Endothelial cell of umbilical vein (primary cell): ENCODE measurements at regions of chr3 and their contacts with region 1.

Region 1: DNA sequence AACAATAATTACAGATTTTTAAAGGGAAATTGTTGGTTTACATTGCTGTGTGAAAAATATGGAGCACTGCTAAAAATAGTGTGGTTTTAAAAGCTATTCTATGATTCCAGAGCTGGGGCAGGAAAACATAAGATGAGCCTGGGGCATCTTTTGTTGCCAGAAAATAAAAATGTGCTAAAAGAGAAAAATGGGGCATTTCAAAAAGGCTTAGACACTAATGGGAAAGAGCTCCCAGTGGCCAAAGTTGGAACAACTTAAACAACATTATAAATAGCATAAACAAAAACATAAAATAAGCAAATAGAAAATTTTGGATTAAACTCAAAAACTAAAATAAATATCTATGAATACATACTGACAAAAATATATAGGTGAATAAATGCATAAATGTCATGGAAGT is 478.9 kb downstream of the NLGN1 start:
- DNase-seq: no peak
- H3K4me3 ChIP-seq: no peak overlapping the region
- H3K27ac ChIP-seq: no peak overlapping the region
- H3K4me1 ChIP-seq: no peaks in the 10 kb centered on the region
- H3K27me3 ChIP-seq: no peaks in the 10 kb centered on the region
- CTCF ChIP-seq: peak; percentile 13 to 23
- POLR2A ChIP-seq: no peak

Region 2: DNA sequence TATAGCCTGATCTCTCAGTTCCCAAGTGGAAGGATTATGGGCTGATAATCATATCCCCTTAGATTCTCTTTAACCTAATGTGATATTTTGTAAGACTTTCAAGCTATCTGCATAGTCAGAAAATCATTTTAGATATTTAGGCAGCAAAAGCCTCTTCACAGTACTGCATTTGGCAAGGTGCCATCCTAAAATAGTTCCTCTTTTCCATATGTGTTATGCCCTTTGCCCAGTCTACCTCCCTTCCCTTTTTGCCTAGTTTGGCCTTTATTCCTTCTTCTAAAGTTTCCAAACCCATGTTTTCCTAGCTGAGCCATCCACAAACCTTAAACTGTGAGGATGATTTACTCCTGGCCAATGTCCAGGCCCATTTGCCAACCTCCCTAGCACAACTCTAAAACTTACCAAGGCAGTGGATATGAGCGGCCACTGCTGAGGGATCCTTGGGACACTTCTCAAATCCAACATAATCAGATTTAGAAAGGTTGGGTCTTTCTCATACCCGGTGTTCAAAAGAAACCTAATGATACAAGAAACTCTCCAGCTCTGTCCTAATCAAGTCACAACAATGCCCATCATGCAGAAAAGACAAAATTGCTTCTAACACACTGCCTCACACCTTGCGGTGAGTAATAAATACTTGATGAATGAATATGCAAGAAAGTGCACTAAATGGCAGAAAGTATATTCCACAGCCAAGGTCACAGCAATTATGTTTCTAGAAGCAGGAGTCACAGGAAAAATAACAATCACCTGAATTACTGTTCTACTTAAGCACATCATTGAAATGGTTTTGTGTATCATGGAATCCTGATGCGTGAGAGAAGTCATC is 15.0 kb after region 1 on chr3:
- CTCF ChIA-PET with region 1: interaction called, 20 read pairs
- POLR2A ChIA-PET with region 1: no interaction called
- dilution Hi-C with region 1: no loop called
- intact Hi-C with region 1: no loop called
- DNase-seq: peak; percentile 17
- H3K4me3 ChIP-seq: no peak overlapping the region
- H3K27ac ChIP-seq: no peak overlapping the region
- H3K4me1 ChIP-seq: peaks cover 21% of the 10 kb centered on the region
- H3K27me3 ChIP-seq: no peaks in the 10 kb centered on the region
- CTCF ChIP-seq: no peak
- POLR2A ChIP-seq: no peak